ENCODE measurements at regions of chr6 and their contacts with region 1.

Region 1: GRCh38 chr6:30515932-30516753 is 26.8 kb downstream of the HLA-E start:
- DNase-seq: peak; percentile 60 to 97 (median 95)
- ATAC-seq: peak; percentile 93
- H3K4me3 ChIP-seq: peak overlapping the region; percentile 64
- H3K4me3 Mint-ChIP-seq: peak overlapping the region; percentile 82 to 96 (median 89)
- H3K27ac ChIP-seq: peak overlapping the region; percentile 82
- H3K27ac Mint-ChIP-seq: peak overlapping the region; percentile 97 to 100 (median 99)
- H3K4me1 ChIP-seq: peaks cover 20 to 62% of the 10 kb centered on the region in 2 donors
- H3K4me1 Mint-ChIP-seq: peaks cover 31 to 91% (median 62%) of the 10 kb centered on the region in 7 donors
- H3K27me3 ChIP-seq: no peaks in the 10 kb centered on the region
- H3K27me3 Mint-ChIP-seq: no peaks in the 10 kb centered on the region

Region 2: GRCh38 chr6:30500421-30501355 is 15.5 kb before region 1 on chr6:
- CTCF ChIA-PET with region 1: interaction called, 18 read pairs
- POLR2A ChIA-PET with region 1: interaction called, 652 read pairs
- intact Hi-C with region 1: no loop called
- DNase-seq: no peak
- ATAC-seq: peak; percentile 35
- H3K4me3 ChIP-seq: peak overlapping the region; percentile 48
- H3K4me3 Mint-ChIP-seq: peak overlapping the region; percentile 76 to 89 (median 86)
- H3K27ac ChIP-seq: peak overlapping the region; percentile 36
- H3K27ac Mint-ChIP-seq: peak overlapping the region; percentile 39 to 93 (median 85)
- H3K4me1 ChIP-seq: peaks cover 9 to 31% of the 10 kb centered on the region in 2 donors
- H3K4me1 Mint-ChIP-seq: peaks cover 24 to 50% (median 46%) of the 10 kb centered on the region in 7 donors
- H3K27me3 ChIP-seq: no peaks in the 10 kb centered on the region
- H3K27me3 Mint-ChIP-seq: no peaks in the 10 kb centered on the region